Mammary epithelial cell (primary cell): ENCODE measurements at regions of chr22 and their contacts with region 1.

Region 1: GRCh38 chr22:39103431-39104005 is 6.5 kb downstream of the APOBEC3H start:
- DNase-seq: no peak
- H3K4me3 ChIP-seq: no peak overlapping the region
- H3K27ac ChIP-seq: no peak overlapping the region
- H3K4me1 ChIP-seq: peaks cover under 1% of the 10 kb centered on the region
- H3K27me3 ChIP-seq: no peaks in the 10 kb centered on the region
- CTCF ChIP-seq: no peak

Region 2: DNA sequence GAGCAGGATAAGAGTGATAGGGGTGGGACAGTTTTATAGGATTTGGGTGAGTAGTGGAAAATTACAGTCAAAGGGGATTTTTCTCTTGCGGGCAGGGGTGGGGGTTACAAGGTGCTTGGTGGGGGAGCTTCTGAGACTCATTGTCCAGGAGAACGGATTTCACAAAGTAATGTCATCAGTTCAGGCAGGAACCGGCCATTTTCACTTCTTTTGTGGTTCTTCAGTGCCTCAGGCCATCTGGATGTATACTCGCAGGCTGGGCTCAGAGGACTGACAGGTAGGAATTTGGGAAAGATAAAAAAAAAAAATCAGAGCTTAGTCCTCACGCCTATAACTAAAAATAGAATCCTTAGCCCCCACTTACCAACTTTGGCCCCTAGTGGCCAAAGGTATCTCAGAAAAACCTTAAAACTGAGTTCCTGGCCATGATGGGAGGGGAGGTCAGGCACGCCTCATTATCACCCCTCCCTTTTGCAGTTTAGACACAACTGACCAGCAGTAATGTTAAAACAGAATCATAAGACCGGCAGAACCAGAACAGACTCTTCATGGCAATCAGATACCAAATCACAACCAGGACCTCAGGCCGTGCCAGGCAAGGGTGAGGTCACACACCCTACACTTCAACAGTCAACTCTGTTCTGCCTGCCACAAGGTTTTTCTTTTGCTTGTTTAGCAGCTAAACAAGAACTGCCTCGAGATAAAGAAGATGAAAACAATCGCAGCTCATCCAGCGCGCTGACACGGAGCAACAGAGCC is 35.3 kb before region 1 on chr22:
- CTCF ChIA-PET with region 1: no interaction called
- dilution Hi-C with region 1: no loop called
- in situ Hi-C with region 1: no loop called
- intact Hi-C with region 1: loop called (anchors 2 kb)
- DNase-seq: peak; percentile 44
- H3K4me3 ChIP-seq: no peak overlapping the region
- H3K27ac ChIP-seq: no peak overlapping the region
- H3K4me1 ChIP-seq: peaks cover 30% of the 10 kb centered on the region
- H3K27me3 ChIP-seq: no peaks in the 10 kb centered on the region
- CTCF ChIP-seq: peak in 1 of 2 donors; percentile 25

Region 3: DNA sequence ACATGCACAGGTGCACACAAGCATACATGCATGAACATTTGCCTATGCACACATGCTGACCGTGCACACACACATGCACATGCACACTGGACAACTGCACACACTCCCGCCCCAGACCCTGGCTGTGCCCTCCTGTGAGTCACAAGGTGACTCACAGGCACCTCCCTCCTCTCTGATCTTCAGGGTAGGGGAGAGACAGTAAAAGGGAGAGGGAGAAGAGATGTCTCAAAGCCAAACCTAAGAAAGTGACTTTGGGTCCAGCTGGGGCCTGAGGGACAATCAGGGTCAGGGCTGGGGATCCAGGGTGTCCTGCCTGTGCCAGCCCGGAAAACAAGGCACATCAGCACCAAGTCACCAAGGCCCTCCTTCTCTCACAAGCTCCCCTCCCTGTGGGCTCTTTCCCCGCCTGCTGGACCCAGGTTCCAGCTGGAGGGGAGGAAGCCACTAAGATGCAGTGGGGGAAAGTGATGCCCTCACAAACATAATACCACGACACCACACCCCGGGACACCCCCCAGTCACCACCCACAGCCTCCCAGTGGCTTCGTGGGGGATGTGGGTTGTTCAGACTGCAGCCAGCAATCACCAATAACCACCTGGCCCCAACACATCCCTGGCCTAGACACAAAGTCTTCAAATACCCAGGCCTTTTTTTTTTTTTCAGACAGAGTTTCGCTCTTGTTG is 102.0 kb after region 1 on chr22:
- CTCF ChIA-PET with region 1: no interaction called
- dilution Hi-C with region 1: no loop called
- in situ Hi-C with region 1: no loop called
- intact Hi-C with region 1: no loop called
- DNase-seq: peak; percentile 78
- H3K4me3 ChIP-seq: no peak overlapping the region
- H3K27ac ChIP-seq: peak overlapping the region; percentile 51
- H3K4me1 ChIP-seq: peaks cover 35% of the 10 kb centered on the region
- H3K27me3 ChIP-seq: no peaks in the 10 kb centered on the region
- CTCF ChIP-seq: no peak